ENCODE measurements at regions of chr1 and their contacts with region 1.

Region 1: GRCh38 chr1:31564134-31564989 is 12.0 kb upstream of the TINAGL1 start:
- DNase-seq: no peak
- H3K4me3 ChIP-seq: no peak overlapping the region
- H3K27ac ChIP-seq: peak overlapping the region; percentile 34
- H3K4me1 ChIP-seq: peaks cover 23% of the 10 kb centered on the region
- H3K27me3 ChIP-seq: peaks cover 7% of the 10 kb centered on the region
- CTCF ChIP-seq: peak; percentile 94

Region 2: DNA sequence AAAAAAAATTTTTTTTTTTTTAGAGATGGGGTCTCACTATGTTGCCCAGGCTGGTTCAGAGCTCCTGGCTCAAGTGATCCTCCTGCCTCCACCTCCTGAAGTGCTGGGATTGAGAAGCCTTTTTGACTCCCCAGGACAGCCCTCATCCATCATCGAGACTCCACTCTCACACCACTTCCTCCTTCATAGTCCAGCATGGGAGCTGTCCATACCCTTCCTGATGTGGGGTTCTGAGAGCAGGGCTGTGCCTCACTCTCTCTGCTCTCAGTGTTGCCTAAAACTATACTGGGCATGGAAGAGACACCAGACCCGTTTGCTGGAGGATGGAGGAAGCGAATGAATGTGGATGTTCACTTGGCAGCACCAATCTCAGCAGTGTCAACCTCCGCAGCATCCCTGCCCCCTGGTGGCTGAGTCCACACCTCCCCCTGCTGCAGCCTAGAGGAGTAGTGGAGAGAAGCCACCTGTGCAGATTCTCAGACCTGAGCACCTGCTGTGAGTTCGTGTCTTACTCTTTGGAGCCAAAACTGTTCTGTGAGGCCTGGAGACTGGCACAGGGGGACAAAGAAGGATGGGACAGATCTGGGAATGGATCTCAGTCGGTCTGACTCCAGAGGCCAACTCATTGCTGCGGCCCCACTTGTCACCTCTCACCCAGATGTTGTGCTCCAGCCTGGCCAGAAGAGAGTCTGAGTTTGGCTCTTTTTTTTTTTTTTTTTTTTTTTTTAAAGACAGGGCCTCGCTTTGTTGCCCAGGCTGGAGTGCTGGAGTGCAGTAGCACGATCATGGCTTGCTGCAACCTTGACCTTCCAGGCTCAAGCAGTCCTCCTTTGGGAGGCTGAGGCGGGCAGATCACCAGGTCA is 29.6 kb after region 1 on chr1:
- intact Hi-C with region 1: loop called (anchors 2 kb)
- DNase-seq: peak; percentile 78
- H3K4me3 ChIP-seq: no peak overlapping the region
- H3K27ac ChIP-seq: no peak overlapping the region
- H3K4me1 ChIP-seq: peaks cover 49% of the 10 kb centered on the region
- H3K27me3 ChIP-seq: no peaks in the 10 kb centered on the region
- CTCF ChIP-seq: peak; percentile 89

Measured in left ventricle myocardium inferior (tissue), 1 donor.